ENCODE measurements at regions of chr2 and their contacts with region 1.

Region 1: GRCh38 chr2:70086838-70087701 is at the start of gene PCBP1:
- DNase-seq: peak; percentile 92

Region 2: GRCh38 chr2:68909793-68910674 is 1177.0 kb before region 1 on chr2:
- CTCF ChIA-PET with region 1: no interaction called
- POLR2A ChIA-PET with region 1: no interaction called
- DNase-seq: peak; percentile 66

Region 3: DNA sequence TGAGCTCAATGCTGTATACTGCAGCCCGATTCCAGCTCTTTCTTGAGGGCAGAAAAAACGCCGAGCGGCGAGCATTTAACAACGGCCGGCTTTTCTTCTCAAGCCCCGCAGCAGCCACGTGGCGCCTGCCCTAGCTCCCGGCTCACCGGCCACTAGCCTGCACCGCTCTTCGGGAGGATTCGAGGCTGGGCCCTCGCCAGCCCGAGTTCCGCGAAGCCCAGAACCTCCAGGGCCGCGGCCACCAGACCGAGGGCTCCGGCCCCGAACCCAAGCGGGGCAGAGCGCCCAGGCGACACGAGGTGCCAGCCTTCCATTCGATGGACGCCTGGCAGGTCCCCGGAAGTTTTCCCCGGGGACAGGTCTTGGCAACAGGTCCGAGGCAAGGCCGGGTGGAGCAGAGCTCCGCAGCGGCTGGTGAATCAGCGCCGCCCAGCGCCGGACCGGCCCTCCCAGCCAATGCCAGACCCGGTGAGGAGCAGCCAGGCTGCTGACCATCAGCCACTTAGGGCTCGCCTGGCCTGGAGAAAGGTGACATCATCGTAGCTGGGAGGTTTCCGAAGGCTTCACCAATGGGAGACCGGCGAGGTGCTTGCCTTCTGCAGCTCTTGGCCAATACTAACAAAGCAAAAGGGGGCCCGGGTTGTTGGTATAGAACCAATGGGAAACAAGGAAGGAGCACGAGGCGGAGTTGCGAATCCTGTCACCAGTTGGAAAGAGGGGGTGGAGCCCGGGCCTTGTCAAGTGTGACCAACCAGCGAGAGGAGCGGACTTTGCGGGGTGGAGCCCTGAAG is 172.7 kb before region 1 on chr2:
- CTCF ChIA-PET with region 1: no interaction called
- POLR2A ChIA-PET with region 1: interaction called, 20 read pairs
- DNase-seq: peak; percentile 95

Region 4: GRCh38 chr2:70070541-70071268 is 16.4 kb before region 1 on chr2:
- CTCF ChIA-PET with region 1: interaction called, 9 read pairs
- POLR2A ChIA-PET with region 1: interaction called, 13 read pairs
- DNase-seq: peak; percentile 87

Region 5: GRCh38 chr2:70124983-70125480 is 38.0 kb after region 1 on chr2:
- CTCF ChIA-PET with region 1: no interaction called
- POLR2A ChIA-PET with region 1: interaction called, 88 read pairs
- DNase-seq: peak; percentile 51

Region 6: GRCh38 chr2:70132244-70133126 is 45.4 kb after region 1 on chr2:
- CTCF ChIA-PET with region 1: interaction called, 3 read pairs
- POLR2A ChIA-PET with region 1: interaction called, 61 read pairs
- DNase-seq: no peak

Region 7: GRCh38 chr2:70137519-70137918 is 50.4 kb after region 1 on chr2:
- CTCF ChIA-PET with region 1: interaction called, 5 read pairs
- POLR2A ChIA-PET with region 1: interaction called, 61 read pairs
- DNase-seq: no peak

Region 8: GRCh38 chr2:70142590-70143313 is 55.7 kb after region 1 on chr2:
- CTCF ChIA-PET with region 1: interaction called, 5 read pairs
- POLR2A ChIA-PET with region 1: interaction called, 45 read pairs
- DNase-seq: peak; percentile 98